ENCODE measurements at regions of chr6 and their contacts with region 1.

Region 1: DNA sequence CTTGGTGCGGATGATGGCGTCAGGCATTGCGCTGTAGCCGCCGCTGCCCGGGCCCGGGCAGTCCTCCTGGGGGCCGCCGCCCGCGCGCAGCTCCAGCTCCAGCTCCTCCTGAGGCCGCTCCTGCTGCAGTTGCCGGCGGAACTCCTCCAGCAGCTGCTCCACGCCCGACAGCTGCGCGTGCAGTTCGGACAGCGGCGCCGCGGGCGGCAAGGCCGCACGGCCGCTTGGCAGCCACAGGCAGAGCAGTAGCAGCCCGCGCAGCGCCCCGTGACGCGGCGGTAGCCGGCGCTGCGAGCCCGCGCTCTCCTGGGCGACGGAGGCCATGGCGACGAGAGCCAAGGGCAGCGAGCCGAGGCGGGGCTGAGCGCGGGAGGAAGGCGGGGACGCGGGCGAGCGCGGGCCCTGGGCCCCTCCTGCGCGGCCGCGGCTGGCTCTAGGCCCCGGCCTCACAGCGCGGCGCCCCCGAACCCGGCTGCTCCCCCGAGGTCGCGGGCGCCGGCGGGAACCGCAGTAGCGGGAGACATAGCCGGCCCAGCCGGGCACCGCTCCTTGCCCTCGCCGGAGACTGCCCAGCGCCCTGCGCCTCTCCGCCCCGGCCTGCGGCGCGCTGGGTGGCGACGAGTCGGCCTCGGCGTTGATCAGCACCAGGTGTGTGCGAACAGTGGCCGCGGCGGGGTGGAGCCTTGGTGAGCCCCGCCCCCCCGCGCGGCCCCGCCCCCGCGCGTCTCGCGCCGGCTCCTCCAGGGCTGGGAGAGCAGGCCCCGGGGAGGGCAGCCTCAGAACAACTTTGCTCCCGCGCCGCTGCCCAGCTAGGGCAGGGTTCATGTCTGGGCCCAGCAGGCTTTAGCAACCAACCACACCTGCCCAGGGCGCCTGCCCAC is at the start of gene LRP11:
- DNase-seq: peak; percentile 73 to 88
- H3K4me3 ChIP-seq: peak within 1 kb of the TSS; percentile 73
- H3K27ac ChIP-seq: peak within 1 kb of the TSS; percentile 92
- H3K4me1 ChIP-seq: peaks cover 70% of the 10 kb centered on the region
- H3K27me3 ChIP-seq: no peaks in the 10 kb centered on the region
- CTCF ChIP-seq: no peak
- total RNA-seq, gene LRP11: 33.8 and 38.6 TPM in 2 replicates

Region 2: GRCh38 chr6:149565527-149566409 is 298.2 kb before region 1 on chr6 and contains the start of gene GINM1:
- CTCF ChIA-PET with region 1: no interaction called
- POLR2A ChIA-PET with region 1: no interaction called
- intact Hi-C with region 1: loop called (anchors 10 kb)
- DNase-seq: peak; percentile 80 to 94
- H3K4me3 ChIP-seq: peak within 1 kb of the TSS; percentile 89
- H3K27ac ChIP-seq: peak within 1 kb of the TSS; percentile 72
- H3K4me1 ChIP-seq: peaks cover 30% of the 10 kb centered on the region
- H3K27me3 ChIP-seq: no peaks in the 10 kb centered on the region
- CTCF ChIP-seq: peak; percentile 71
- total RNA-seq, gene GINM1: 14.5 and 14.7 TPM in 2 replicates

Region 3: DNA sequence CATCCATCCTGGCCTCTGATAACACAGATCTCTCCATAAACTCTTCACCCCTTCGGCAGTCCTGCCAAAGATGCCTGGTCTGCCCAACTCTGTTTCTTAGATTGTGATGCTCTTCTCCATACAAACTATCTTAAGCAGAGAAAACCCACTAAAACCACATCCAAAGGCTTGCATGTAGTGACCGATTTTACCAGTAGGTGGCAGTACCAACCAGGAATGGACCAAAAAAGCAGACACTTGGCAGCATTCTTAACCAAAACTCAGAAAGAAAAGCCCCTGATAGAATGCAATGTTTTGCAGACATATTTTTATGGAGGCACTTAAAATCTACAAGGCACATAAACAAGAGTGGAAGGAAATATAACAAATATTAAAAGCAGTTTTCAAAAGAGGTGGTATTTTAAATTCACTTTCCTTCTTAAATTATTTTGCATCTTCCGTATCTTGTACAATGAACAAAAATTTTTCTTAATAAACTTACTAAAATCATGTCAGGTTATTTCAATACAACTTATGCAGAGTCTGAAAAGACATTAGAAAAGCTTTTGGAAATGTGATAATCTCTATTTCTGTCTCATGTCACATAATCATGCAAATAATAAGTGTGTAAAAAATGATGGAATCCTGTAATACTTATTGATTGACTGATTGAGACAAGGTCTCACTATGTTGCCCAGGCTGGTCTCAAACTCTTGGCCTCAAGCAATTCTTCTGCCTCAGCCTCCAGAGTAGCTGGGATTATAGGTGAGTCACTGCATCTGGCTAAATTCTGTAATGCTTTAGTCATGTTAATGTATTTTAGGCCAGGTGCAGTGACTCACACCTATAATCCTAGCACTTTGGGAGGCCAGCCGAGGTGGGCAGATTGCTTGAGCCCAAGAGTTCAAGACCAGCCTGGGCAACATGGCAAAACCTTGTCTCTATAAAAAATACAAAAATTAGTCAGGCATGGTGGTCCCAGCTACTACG is 29.1 kb before region 1 on chr6:
- CTCF ChIA-PET with region 1: interaction called, 3 read pairs
- POLR2A ChIA-PET with region 1: no interaction called
- intact Hi-C with region 1: loop called (anchors 1 kb)
- DNase-seq: peak; percentile 48 to 79
- H3K4me3 ChIP-seq: no peak overlapping the region
- H3K27ac ChIP-seq: peak overlapping the region; percentile 45
- H3K4me1 ChIP-seq: no peaks in the 10 kb centered on the region
- H3K27me3 ChIP-seq: no peaks in the 10 kb centered on the region
- CTCF ChIP-seq: peak; percentile 96

Region 4: GRCh38 chr6:149840345-149841075 is 23.4 kb before region 1 on chr6:
- CTCF ChIA-PET with region 1: no interaction called
- POLR2A ChIA-PET with region 1: interaction called, 5 read pairs
- intact Hi-C with region 1: loop called (anchors 1 kb)
- DNase-seq: peak; percentile 70 to 78
- H3K4me3 ChIP-seq: no peak overlapping the region
- H3K27ac ChIP-seq: 0 out of 2 replicates have a peak overlapping the region, but pooled peaks have one; percentile 3
- H3K4me1 ChIP-seq: peaks cover 48% of the 10 kb centered on the region
- H3K27me3 ChIP-seq: no peaks in the 10 kb centered on the region
- CTCF ChIP-seq: peak; percentile 83

Region 5: DNA sequence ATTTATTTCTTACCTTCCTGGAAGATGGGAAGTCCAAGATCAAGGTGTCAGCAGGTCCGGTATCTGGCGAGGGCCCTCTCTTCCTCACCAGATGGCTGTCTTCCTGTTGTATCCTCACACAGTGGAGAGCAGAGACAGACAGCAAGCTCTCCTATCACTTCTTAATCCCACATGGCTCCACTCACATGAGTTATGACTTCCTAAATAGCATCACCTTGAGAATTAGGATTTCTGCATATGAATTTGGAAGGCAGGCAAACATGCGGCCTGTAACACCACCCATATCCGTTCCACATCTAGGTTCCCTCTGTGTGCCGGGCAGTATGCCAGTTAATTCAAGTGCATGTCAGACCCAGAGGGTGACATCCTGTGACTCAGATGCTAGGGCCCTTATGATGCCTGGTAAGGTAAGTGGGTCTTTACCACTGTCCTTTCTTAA is 31.9 kb after region 1 on chr6:
- CTCF ChIA-PET with region 1: interaction called, 3 read pairs
- POLR2A ChIA-PET with region 1: no interaction called
- intact Hi-C with region 1: loop called (anchors 2 kb)
- DNase-seq: peak; percentile 59 to 77
- H3K4me3 ChIP-seq: peak overlapping the region; percentile 36; the same call in 1 of the 2 replicates
- H3K27ac ChIP-seq: peak overlapping the region; percentile 75
- H3K4me1 ChIP-seq: peaks cover 45% of the 10 kb centered on the region
- H3K27me3 ChIP-seq: no peaks in the 10 kb centered on the region
- CTCF ChIP-seq: no peak

Region 6: GRCh38 chr6:149915970-149916865 is 52.3 kb after region 1 on chr6:
- CTCF ChIA-PET with region 1: no interaction called
- POLR2A ChIA-PET with region 1: no interaction called
- intact Hi-C with region 1: loop called (anchors 2 kb)
- DNase-seq: no peak
- H3K4me3 ChIP-seq: no peak overlapping the region
- H3K27ac ChIP-seq: no peak overlapping the region
- H3K4me1 ChIP-seq: no peaks in the 10 kb centered on the region
- H3K27me3 ChIP-seq: no peaks in the 10 kb centered on the region
- CTCF ChIP-seq: no peak

Region 7: GRCh38 chr6:149925974-149926777 is 62.2 kb after region 1 on chr6:
- CTCF ChIA-PET with region 1: interaction called, 3 read pairs
- POLR2A ChIA-PET with region 1: no interaction called
- intact Hi-C with region 1: loop called (anchors 2 kb)
- DNase-seq: peak; percentile 66 to 81
- H3K4me3 ChIP-seq: peak overlapping the region; percentile 62
- H3K27ac ChIP-seq: no peak overlapping the region
- H3K4me1 ChIP-seq: peaks cover 4% of the 10 kb centered on the region
- H3K27me3 ChIP-seq: no peaks in the 10 kb centered on the region
- CTCF ChIP-seq: peak; percentile 92

Region 8: GRCh38 chr6:151160929-151161757 is 1297.2 kb after region 1 on chr6:
- CTCF ChIA-PET with region 1: no interaction called
- POLR2A ChIA-PET with region 1: no interaction called
- intact Hi-C with region 1: no loop called
- DNase-seq: peak; percentile 37 to 71
- H3K4me3 ChIP-seq: no peak overlapping the region
- H3K27ac ChIP-seq: no peak overlapping the region
- H3K4me1 ChIP-seq: no peaks in the 10 kb centered on the region
- H3K27me3 ChIP-seq: no peaks in the 10 kb centered on the region
- CTCF ChIP-seq: no peak